Mammary epithelial cell (primary cell): ENCODE measurements at regions of chr14 and their contacts with region 1.

Region 1: DNA sequence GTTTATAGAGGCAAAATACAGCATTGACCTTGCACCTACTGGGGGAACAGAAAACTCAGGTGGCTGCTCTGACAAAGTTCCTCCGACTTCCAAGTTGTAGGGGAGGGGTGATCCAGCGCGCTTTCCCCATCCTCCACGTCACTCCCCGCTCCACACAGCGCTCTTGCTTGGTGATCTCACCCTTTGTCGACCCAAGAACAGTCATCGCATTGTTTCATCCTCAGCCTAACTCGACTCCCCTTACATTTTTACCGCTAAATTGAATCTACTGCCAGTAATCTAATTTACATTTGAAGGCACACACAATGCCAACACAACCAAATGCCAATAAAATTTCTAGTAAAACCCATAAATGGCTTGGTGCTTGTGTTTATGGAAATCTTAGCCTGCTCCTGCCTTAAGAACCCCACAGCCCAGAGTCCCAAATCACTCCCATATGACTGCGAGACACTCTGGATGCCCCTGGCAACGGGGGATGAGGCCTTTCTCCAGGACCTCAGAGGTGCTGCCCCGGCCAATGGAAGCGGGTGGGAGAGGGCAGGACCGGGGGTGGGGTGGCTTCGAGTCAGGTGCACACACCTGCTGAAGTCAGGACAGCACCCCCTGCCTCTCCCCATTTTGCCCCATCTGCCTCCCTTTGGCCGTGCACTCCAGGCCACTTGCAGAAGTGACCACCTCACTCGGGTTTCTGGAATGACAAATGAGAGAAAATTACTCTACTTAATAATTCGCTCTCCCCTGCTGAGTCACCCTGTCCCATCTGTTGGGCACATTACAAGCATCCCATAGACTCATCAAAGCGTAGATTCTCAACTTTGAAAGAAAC is 98.2 kb upstream of the GSC start:
- DNase-seq: peak; percentile 15
- H3K4me3 ChIP-seq: no peak overlapping the region
- H3K27ac ChIP-seq: no peak overlapping the region
- H3K4me1 ChIP-seq: no peaks in the 10 kb centered on the region
- H3K27me3 ChIP-seq: no peaks in the 10 kb centered on the region
- CTCF ChIP-seq: no peak

Region 2: GRCh38 chr14:94926176-94926575 is 58.0 kb after region 1 on chr14:
- CTCF ChIA-PET with region 1: no interaction called
- dilution Hi-C with region 1: loop called (anchors 5 kb)
- in situ Hi-C with region 1: no loop called
- intact Hi-C with region 1: no loop called
- DNase-seq: no peak
- H3K4me3 ChIP-seq: no peak overlapping the region
- H3K27ac ChIP-seq: no peak overlapping the region
- H3K4me1 ChIP-seq: no peaks in the 10 kb centered on the region
- H3K27me3 ChIP-seq: no peaks in the 10 kb centered on the region
- CTCF ChIP-seq: no peak

Region 3: GRCh38 chr14:95098984-95099599 is 230.9 kb after region 1 on chr14:
- CTCF ChIA-PET with region 1: no interaction called
- dilution Hi-C with region 1: no loop called
- in situ Hi-C with region 1: no loop called
- intact Hi-C with region 1: no loop called
- DNase-seq: peak; percentile 49
- H3K4me3 ChIP-seq: no peak overlapping the region
- H3K27ac ChIP-seq: no peak overlapping the region
- H3K4me1 ChIP-seq: no peaks in the 10 kb centered on the region
- H3K27me3 ChIP-seq: no peaks in the 10 kb centered on the region
- CTCF ChIP-seq: peak; percentile 70 to 89